Heart left ventricle (tissue), 16 donors: ENCODE measurements at regions of chr12 and their contacts with region 1.

Region 1: GRCh38 chr12:32062881-32063280 is 43.8 kb upstream of the BICD1 start:
- DNase-seq: no peak
- ATAC-seq: no peak
- H3K4me3 ChIP-seq: no peak overlapping the region
- H3K27ac ChIP-seq: no peak overlapping the region
- H3K4me1 ChIP-seq: peaks cover 0 to 4% (median 0%) of the 10 kb centered on the region in 12 donors
- H3K27me3 ChIP-seq: no peaks in the 10 kb centered on the region
- CTCF ChIP-seq: no peak
- POLR2A ChIP-seq: no peak

Region 2: GRCh38 chr12:31650927-31651326 is 412.0 kb before region 1 on chr12:
- intact Hi-C with region 1: loop called in 3 of 10 experiments (anchors 5 to 10 kb)
- DNase-seq: no peak
- ATAC-seq: peak in 3 of 4 donors; percentile 10 to 77 (median 43)
- H3K4me3 ChIP-seq: no peak overlapping the region
- H3K27ac ChIP-seq: peak overlapping the region in 3 of 12 donors; percentile 3 to 54 (median 36)
- H3K4me1 ChIP-seq: peaks cover 0 to 26% (median 0%) of the 10 kb centered on the region in 12 donors
- H3K27me3 ChIP-seq: no peaks in the 10 kb centered on the region
- CTCF ChIP-seq: no peak
- POLR2A ChIP-seq: no peak

Region 3: GRCh38 chr12:31682136-31682962 is 380.5 kb before region 1 on chr12:
- intact Hi-C with region 1: loop called in 4 of 10 experiments (anchors 5 to 10 kb)
- DNase-seq: peak in 4 of 5 donors; percentile 34 to 56 (median 43)
- ATAC-seq: peak; percentile 58 to 88 (median 78)
- H3K4me3 ChIP-seq: no peak overlapping the region
- H3K27ac ChIP-seq: no peak overlapping the region
- H3K4me1 ChIP-seq: peaks cover 0 to 11% (median 0%) of the 10 kb centered on the region in 12 donors
- H3K27me3 ChIP-seq: no peaks in the 10 kb centered on the region
- CTCF ChIP-seq: peak; percentile 48 to 73 (median 66)
- POLR2A ChIP-seq: no peak

Region 4: DNA sequence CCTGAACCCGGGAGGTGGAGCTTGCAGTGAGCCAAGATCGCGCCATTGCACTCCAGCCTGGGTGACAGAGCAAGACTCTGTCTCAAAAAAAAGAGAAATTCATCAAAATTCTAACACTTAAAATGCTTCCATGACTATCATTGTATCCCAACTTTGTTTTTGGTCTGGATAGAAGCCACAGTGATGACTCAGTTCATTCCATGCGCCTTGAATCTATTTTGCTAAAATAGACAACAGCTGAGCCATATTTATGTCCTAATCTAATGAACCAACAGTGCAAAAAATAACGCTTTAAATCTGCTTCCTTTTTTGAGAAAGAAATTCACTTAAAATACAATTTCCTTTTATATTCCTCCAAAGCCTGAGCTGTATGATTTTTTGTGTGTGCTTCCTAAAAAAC is 20.6 kb after region 1 on chr12:
- intact Hi-C with region 1: no loop called
- DNase-seq: no peak
- ATAC-seq: peak in 1 of 4 donors; percentile 42
- H3K4me3 ChIP-seq: no peak overlapping the region
- H3K27ac ChIP-seq: peak overlapping the region in 1 of 12 donors; percentile 42
- H3K4me1 ChIP-seq: no peaks in the 10 kb centered on the region
- H3K27me3 ChIP-seq: no peaks in the 10 kb centered on the region
- CTCF ChIP-seq: no peak
- POLR2A ChIP-seq: no peak

Region 5: GRCh38 chr12:32106517-32107358 is 43.9 kb after region 1 on chr12 and contains the start of gene BICD1:
- intact Hi-C with region 1: loop called in 2 of 10 experiments (anchors 2 to 5 kb)
- DNase-seq: peak; percentile 93 to 95 (median 93)
- ATAC-seq: peak; percentile 88 to 98 (median 98)
- H3K4me3 ChIP-seq: peak within 1 kb of the TSS; percentile 68 to 98 (median 89)
- H3K27ac ChIP-seq: peak within 1 kb of the TSS; percentile 63 to 96 (median 86)
- H3K4me1 ChIP-seq: peaks cover 0 to 50% (median 27%) of the 10 kb centered on the region in 12 donors
- H3K27me3 ChIP-seq: no peaks in the 10 kb centered on the region
- CTCF ChIP-seq: peak in 10 of 12 donors; percentile 13 to 75 (median 49)
- POLR2A ChIP-seq: peak in 1 of 2 donors; percentile 88
- total RNA-seq, gene BICD1: 2.1 to 16.3 (median 8.9) TPM

Region 6: GRCh38 chr12:32312049-32312670 is 249.3 kb after region 1 on chr12:
- intact Hi-C with region 1: loop called in 7 of 10 experiments (anchors 1 to 5 kb)
- DNase-seq: no peak
- ATAC-seq: peak in 1 of 4 donors; percentile 22
- H3K4me3 ChIP-seq: no peak overlapping the region
- H3K27ac ChIP-seq: no peak overlapping the region
- H3K4me1 ChIP-seq: peaks cover 0 to 14% (median 5%) of the 10 kb centered on the region in 12 donors
- H3K27me3 ChIP-seq: no peaks in the 10 kb centered on the region
- CTCF ChIP-seq: peak; percentile 19 to 65 (median 52)
- POLR2A ChIP-seq: no peak